ENCODE measurements at regions of chr11 and their contacts with region 1.

Region 1: DNA sequence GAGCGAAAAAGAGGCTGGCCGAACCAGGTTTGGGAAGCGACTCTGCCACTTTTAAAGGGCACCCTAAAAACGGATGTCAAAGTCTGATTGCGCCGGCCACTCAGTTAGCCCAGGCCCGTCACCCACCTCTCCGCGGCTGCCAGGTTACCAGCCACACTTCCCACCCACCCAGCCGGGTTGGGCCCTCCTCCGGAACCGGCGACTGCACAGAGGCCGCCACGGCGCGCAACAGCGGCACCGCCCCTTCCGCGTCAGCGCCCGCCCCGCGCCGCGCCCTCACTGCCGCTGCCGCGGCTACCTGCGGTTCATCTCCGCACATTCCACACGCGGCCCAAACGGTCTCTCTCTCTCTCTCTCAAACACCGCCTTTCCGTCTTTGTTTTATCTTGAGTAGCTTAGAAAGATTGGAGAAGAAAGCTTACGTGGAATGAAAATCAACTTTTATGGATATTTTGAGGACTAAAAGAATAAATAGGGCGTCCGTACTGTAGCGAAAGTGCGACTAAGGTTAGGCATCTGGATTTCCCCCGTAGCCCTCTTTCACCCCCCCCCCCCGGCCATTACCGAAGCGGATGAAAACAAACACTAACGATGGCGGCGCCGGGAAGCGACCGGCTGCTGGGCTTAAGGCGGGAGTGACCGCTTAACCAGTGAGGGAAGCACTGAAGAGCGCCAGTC is at the starts of genes ATG13 and HARBI1:
- DNase-seq: peak; percentile 90
- H3K4me3 Mint-ChIP-seq: peak within 1 kb of the TSS; percentile 89
- H3K27ac Mint-ChIP-seq: peak within 1 kb of the TSS; percentile 99
- H3K4me1 Mint-ChIP-seq: peaks cover 40% of the 10 kb centered on the region
- H3K27me3 Mint-ChIP-seq: no peaks in the 10 kb centered on the region
- total RNA-seq, gene ATG13: 54.7 to 55.6 TPM
- total RNA-seq, gene HARBI1: 2.8 to 3.1 TPM

Region 2: GRCh38 chr11:45846974-45847910 is 769.9 kb before region 1 on chr11 and contains the start of gene CRY2:
- CTCF ChIA-PET with region 1: no interaction called
- intact Hi-C with region 1: loop called (anchors 10 kb)
- DNase-seq: peak; percentile 99
- H3K4me3 Mint-ChIP-seq: peak within 1 kb of the TSS; percentile 78
- H3K27ac Mint-ChIP-seq: peak within 1 kb of the TSS; percentile 63
- H3K4me1 Mint-ChIP-seq: peaks cover 45% of the 10 kb centered on the region
- H3K27me3 Mint-ChIP-seq: no peaks in the 10 kb centered on the region
- total RNA-seq, gene CRY2: 13.9 to 16.2 TPM

Region 3: GRCh38 chr11:46121724-46122477 is 495.2 kb before region 1 on chr11:
- CTCF ChIA-PET with region 1: no interaction called
- intact Hi-C with region 1: loop called (anchors 10 kb)
- DNase-seq: peak; percentile 79
- H3K4me3 Mint-ChIP-seq: peak overlapping the region; percentile 81
- H3K27ac Mint-ChIP-seq: peak overlapping the region; percentile 85
- H3K4me1 Mint-ChIP-seq: peaks cover 41% of the 10 kb centered on the region
- H3K27me3 Mint-ChIP-seq: no peaks in the 10 kb centered on the region

Region 4: DNA sequence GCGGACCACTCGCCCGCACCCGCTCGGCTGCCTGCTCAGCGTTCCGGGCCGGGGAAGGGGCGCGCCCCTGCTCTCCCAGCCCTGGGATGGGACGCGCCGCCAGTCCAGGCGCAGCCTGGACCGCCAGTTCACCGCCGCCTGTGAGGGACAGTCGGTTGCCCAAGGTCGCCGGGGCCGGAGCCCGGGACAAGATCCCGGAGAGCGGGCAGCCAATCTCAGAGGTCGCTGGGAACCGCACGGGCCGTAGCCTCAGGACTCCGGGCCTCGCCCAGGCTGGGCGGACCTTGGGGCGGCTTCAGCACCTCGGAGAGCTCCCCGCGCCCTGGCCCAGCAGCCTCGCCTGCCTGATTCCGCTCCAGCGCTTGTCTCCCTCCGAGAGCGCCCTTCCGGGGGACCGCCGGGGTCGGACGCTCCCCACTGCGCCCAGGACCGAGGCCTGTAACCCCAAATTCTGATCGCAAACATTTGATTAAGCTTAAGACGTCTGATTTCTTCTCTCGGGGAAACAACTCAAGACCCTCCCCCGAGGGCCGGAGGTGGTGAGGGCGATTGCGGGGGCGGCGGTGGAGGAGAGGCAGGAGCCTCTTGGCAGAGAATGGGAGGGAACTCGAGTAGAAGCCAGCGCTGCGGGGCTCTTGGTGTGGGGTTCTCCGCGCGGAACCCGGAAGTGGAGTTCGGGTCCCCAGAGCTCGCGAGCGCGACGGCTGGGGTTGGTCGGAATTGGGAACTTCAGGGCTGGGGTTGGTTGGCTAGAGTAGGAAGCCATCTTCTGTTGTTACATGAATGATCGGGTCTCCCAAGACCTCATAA is 224.5 kb before region 1 on chr11:
- CTCF ChIA-PET with region 1: interaction called, 16 read pairs
- intact Hi-C with region 1: loop called (anchors 1 kb)
- DNase-seq: peak; percentile 82
- H3K4me3 Mint-ChIP-seq: peak overlapping the region; percentile 66
- H3K27ac Mint-ChIP-seq: no peak overlapping the region
- H3K4me1 Mint-ChIP-seq: peaks cover 25% of the 10 kb centered on the region
- H3K27me3 Mint-ChIP-seq: peaks cover 43% of the 10 kb centered on the region

Region 5: DNA sequence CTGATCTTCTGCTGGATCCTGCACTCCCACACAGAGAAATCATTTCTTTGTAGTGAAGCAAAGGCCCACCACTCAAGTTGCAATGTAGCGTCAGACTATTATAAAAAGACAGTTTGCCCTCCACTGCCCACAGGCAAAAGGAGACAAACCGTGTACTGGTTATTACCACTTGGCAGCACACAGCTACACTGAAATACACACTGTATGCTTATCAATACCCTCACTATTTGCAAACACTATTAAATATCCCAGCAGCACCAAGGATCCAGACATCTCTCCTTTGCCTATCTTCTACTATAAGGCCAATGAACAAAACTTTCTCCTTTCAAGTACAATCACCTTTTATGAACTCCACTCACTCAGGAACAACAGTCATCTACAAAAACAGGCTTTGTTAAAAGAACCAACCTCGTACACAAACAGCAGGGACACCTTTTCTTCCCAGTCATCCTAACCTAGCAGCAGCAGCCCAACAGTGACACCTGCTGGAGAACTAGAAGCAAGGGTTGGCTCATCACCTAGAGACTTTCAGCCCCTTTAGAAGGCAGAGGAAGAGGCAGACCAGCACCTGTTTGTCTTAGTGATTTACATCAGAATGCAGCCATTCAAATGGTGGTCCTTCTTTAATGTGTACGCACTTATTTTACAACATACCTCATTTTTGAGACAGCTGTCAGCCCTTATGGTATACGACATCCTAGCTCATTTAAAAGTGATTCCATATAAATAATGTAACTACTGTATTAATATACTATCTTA is 79.4 kb before region 1 on chr11:
- CTCF ChIA-PET with region 1: interaction called, 10 read pairs
- intact Hi-C with region 1: loop called (anchors 5 kb)
- DNase-seq: peak; percentile 79
- H3K4me3 Mint-ChIP-seq: no peak overlapping the region
- H3K27ac Mint-ChIP-seq: no peak overlapping the region
- H3K4me1 Mint-ChIP-seq: peaks cover 21% of the 10 kb centered on the region
- H3K27me3 Mint-ChIP-seq: no peaks in the 10 kb centered on the region

Region 6: DNA sequence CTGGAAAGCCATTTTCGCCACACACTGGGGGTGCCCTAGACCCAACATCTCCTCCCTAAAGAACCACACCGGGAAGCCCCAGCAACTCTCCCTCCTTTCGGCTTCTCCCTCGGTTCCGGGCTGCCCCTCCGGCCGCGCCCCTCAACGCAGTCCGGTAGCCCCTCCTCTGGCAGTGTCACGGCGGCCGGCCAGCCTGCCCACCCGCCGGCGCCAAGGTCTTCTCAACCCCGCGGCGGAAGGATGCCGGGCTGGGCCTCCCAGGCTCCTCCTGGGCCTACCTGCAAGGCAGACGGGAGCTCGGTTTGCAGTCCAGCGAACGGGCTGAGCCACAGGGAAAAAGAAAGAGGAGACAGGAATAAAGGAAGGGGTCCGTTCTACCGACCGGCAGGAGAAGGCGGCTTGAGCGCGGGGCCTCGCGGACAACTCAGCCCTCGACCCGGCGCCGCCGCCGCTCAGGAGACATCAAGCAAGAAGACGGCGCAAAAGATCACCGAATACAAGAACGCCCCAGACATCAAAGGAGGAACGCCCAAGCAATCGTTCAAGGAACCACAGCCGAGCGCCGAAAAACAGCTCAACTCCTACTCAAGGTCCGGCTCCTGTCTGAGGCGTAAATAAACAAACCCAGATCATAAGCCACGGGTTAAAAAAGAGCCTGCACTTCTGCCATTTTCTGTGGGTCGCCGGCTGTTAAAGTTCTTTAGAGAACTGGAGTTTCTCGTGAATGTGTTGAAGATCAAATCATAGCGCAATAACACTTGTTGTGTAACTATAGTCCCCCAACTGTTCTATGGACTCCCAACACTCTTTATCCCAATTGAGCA is 23.4 kb before region 1 on chr11 and contains the start of gene AMBRA1:
- CTCF ChIA-PET with region 1: interaction called, 6 read pairs
- intact Hi-C with region 1: loop called (anchors 1 kb)
- DNase-seq: peak; percentile 94
- H3K4me3 Mint-ChIP-seq: peak within 1 kb of the TSS; percentile 94
- H3K27ac Mint-ChIP-seq: peak within 1 kb of the TSS; percentile 80
- H3K4me1 Mint-ChIP-seq: peaks cover 39% of the 10 kb centered on the region
- H3K27me3 Mint-ChIP-seq: no peaks in the 10 kb centered on the region
- total RNA-seq, gene AMBRA1: 19.0 to 23.1 TPM

Region 7: GRCh38 chr11:46845740-46846509 is 228.8 kb after region 1 on chr11 and contains the start of gene CKAP5:
- CTCF ChIA-PET with region 1: no interaction called
- intact Hi-C with region 1: loop called (anchors 2 kb)
- DNase-seq: peak; percentile 91
- H3K4me3 Mint-ChIP-seq: peak within 1 kb of the TSS; percentile 95
- H3K27ac Mint-ChIP-seq: peak within 1 kb of the TSS; percentile 91
- H3K4me1 Mint-ChIP-seq: peaks cover 33% of the 10 kb centered on the region
- H3K27me3 Mint-ChIP-seq: no peaks in the 10 kb centered on the region
- total RNA-seq, gene CKAP5: 205 to 216 TPM

Measured in activated naive CD4-positive, alpha-beta T cell treated with anti-CD3 and anti-CD28 coated beads for 36 hours (primary cell).